Activated CD8-positive, alpha-beta memory T cell treated with anti-CD3 and anti-CD28 coated beads, Interleukin-2, amount 10 ng/mL, durations not matched to agents 7 days and 5 days (primary cell): ENCODE measurements at regions of chr11 and their contacts with region 1.

Region 1: GRCh38 chr11:119323538-119324033 is 6.7 kb upstream of the MCAM start:
- DNase-seq: peak; percentile 87
- ATAC-seq: no peak
- H3K4me3 Mint-ChIP-seq: no peak overlapping the region
- H3K27ac Mint-ChIP-seq: no peak overlapping the region
- H3K4me1 Mint-ChIP-seq: peaks cover 28% of the 10 kb centered on the region
- H3K27me3 Mint-ChIP-seq: peaks cover 8% of the 10 kb centered on the region

Region 2: GRCh38 chr11:119168471-119169281 is 154.9 kb before region 1 on chr11 and contains the start of gene NLRX1:
- CTCF ChIA-PET with region 1: interaction called, 13 read pairs
- DNase-seq: peak; percentile 91
- ATAC-seq: peak; percentile 95
- H3K4me3 Mint-ChIP-seq: peak within 1 kb of the TSS; percentile 85
- H3K27ac Mint-ChIP-seq: peak within 1 kb of the TSS; percentile 91
- H3K4me1 Mint-ChIP-seq: peaks cover 20% of the 10 kb centered on the region
- H3K27me3 Mint-ChIP-seq: no peaks in the 10 kb centered on the region
- total RNA-seq, gene NLRX1: 21.2 to 22.2 TPM

Region 3: DNA sequence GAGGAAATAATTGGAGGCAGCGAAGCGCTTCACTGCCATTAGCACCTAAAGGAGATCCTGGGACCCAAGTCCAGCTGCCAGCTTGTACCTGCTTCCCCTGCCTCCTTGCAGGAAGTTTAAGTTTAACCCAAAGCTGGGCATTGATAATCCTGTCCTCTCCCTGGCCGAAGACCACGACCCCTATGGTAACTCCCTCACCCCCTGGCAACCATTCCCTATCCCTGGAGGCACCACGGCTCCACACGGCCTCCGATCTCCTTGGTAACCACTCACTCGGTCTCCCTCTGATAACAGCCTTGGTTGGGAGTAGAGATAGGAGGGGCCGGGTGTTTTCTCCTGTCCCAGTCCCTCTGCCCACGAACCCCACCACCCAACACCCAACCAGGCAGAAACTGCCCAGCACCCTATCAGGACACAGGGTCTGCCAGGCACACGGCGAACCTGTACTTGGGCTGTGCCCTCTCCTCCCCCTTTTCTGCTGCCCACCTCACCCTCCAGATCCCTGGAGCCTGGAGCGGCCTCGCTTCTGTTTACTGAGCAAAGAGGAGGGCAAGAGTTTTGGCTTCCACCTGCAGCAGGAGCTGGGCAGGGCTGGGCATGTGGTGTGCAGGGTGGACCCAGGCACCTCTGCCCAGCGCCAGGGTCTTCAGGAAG is 137.5 kb before region 1 on chr11:
- CTCF ChIA-PET with region 1: no interaction called
- DNase-seq: no peak
- ATAC-seq: no peak
- H3K4me3 Mint-ChIP-seq: no peak overlapping the region
- H3K27ac Mint-ChIP-seq: no peak overlapping the region
- H3K4me1 Mint-ChIP-seq: no peaks in the 10 kb centered on the region
- H3K27me3 Mint-ChIP-seq: no peaks in the 10 kb centered on the region

Region 4: DNA sequence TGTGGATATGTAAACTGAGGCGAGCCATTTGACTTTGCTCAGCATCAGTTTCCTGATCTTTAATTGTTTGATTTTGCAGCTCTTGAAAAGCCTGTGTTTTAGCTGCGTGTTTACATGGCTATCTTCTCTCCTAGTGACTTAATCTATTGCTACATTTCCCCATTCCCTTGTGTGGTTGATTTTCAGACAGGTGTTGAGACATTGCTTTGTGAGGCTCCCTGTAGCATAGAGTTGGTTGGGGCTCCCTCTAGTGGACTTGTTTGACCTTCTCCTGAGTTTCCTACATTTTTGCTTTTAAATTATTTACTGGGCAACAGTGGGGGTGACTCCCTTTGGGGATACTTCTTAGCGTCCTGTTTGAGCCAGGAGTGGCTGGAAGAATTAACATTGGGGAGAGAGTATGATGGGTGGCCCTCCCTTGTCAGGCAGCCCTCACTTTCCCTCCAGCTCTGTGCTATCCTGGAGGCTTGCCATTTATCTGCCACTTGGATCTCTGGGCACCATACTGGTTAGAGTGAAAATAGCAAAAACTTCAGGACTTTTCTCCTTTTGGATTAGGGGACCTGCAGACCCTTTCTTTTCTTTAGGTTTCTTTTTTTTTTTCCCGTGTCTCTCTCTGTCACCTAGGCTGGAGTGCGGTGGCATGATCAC is 126.6 kb before region 1 on chr11:
- CTCF ChIA-PET with region 1: interaction called, 40 read pairs
- DNase-seq: peak; percentile 76
- ATAC-seq: peak; percentile 97
- H3K4me3 Mint-ChIP-seq: no peak overlapping the region
- H3K27ac Mint-ChIP-seq: no peak overlapping the region
- H3K4me1 Mint-ChIP-seq: peaks cover 4% of the 10 kb centered on the region
- H3K27me3 Mint-ChIP-seq: no peaks in the 10 kb centered on the region

Region 5: DNA sequence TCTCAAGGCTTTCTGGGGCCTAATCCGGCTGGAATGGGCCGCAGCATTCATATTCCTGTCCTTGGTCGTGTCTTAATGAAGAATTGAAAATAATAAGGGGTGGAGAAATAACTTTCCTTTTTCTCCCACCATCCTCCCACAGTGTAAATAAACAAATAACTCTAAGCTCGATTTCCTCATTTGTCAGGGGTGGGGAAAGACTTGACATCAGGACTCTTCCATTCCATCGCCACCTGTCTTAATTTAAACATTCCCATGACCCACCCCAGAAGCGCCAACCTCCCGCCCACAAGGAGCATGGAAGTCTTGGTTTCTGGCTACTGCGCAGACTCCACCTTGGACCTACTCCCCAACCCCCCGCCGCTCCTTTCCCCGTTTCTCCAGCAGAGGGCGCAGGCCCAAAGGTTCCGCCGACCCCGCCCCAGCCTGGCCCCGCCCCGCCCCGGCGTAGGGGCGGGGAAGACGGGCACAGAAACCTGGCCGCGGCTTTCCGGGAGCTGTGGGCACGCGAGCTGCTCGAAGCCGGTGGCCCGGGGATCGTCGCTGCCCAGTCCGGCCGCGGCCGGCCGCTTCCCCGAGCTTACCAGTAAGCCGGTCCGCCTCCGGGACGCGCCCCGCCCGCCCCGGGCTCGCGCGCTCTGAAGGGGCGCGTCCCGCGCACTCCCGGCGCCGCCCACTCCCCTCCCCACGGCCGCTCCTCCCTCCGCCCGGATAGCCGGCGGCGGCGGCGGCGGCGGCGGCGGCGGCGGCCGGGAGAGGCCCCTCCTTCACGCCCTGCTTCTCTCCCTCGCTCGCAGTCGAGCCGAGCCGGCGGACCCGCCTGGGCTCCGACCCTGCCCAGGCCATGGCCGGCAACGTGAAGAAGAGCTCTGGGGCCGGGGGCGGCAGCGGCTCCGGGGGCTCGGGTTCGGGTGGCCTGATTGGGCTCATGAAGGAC is 117.7 kb before region 1 on chr11 and contains the start of gene CBL:
- CTCF ChIA-PET with region 1: interaction called, 66 read pairs
- DNase-seq: peak; percentile 97
- ATAC-seq: peak; percentile 88
- H3K4me3 Mint-ChIP-seq: peak within 1 kb of the TSS; percentile 99
- H3K27ac Mint-ChIP-seq: peak within 1 kb of the TSS; percentile 88
- H3K4me1 Mint-ChIP-seq: peaks cover 29% of the 10 kb centered on the region
- H3K27me3 Mint-ChIP-seq: no peaks in the 10 kb centered on the region
- total RNA-seq, gene CBL: 40.0 to 49.2 TPM

Region 6: DNA sequence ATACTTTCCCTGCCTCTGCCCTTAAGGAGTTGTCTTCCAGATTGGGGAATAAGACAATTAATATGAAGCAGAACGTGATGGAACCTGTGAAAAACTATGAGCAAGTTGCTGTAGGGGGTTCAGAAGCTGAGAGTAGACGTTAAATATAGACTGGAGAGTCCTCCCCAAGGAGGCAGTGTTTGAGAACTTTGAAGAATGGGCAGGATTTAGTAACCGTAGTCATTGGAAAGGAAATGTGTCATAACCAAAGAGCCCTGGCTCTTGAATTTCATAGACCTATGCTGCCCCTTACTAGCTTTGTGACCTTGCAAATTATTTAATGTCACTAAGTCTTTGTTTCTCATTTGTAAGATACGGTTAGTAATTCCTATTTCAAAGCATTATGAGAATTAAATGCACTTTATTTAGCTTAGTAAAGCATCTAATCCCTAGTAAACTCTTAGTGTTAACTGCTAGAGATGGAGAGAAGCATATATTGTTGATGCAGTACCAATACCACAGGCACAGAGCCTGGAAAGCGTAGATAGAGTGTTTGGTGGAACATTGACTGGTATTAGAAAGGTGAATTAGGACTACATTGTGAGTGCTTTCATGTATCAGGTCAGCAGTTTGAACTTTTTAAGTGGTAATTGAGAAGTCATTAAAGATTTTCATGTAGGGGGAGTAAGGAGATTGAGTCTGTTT is 60.8 kb before region 1 on chr11:
- CTCF ChIA-PET with region 1: interaction called, 20 read pairs
- DNase-seq: peak; percentile 45
- ATAC-seq: peak; percentile 82
- H3K4me3 Mint-ChIP-seq: no peak overlapping the region
- H3K27ac Mint-ChIP-seq: no peak overlapping the region
- H3K4me1 Mint-ChIP-seq: peaks cover 57% of the 10 kb centered on the region
- H3K27me3 Mint-ChIP-seq: no peaks in the 10 kb centered on the region

Region 7: DNA sequence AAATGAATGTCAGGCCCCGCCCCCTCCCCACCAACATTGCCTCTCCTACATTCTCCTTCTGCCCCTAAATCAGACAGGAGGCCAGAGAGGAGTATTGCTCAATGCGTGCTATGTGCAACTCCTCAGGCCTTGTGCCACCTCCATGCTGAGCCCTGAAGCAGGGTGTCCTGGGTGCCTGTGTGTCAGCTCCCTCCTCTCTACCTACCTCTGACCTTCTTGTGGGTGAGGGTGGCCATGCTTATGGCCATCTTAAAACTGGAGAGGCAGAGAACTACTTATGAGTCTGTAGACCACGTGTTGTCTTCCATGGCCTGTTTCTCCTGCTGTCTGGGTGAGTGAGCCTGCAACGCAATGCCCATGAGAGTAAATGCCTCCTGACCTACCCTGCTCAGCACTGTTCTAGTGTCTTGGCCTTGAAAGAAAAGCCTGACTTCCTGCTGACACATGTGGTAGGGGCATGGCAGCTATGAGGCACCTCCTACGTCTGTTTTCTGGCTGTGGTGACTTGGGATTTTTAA is 17.2 kb before region 1 on chr11:
- CTCF ChIA-PET with region 1: interaction called, 33 read pairs
- DNase-seq: no peak
- ATAC-seq: peak; percentile 63
- H3K4me3 Mint-ChIP-seq: no peak overlapping the region
- H3K27ac Mint-ChIP-seq: peak overlapping the region; percentile 56
- H3K4me1 Mint-ChIP-seq: peaks cover 16% of the 10 kb centered on the region
- H3K27me3 Mint-ChIP-seq: no peaks in the 10 kb centered on the region

Region 8: GRCh38 chr11:119356349-119357031 is 32.9 kb after region 1 on chr11:
- CTCF ChIA-PET with region 1: interaction called, 16 read pairs
- DNase-seq: peak; percentile 84
- ATAC-seq: peak; percentile 95
- H3K4me3 Mint-ChIP-seq: peak overlapping the region; percentile 77
- H3K27ac Mint-ChIP-seq: peak overlapping the region; percentile 60
- H3K4me1 Mint-ChIP-seq: peaks cover 25% of the 10 kb centered on the region
- H3K27me3 Mint-ChIP-seq: peaks cover 40% of the 10 kb centered on the region

Region 9: DNA sequence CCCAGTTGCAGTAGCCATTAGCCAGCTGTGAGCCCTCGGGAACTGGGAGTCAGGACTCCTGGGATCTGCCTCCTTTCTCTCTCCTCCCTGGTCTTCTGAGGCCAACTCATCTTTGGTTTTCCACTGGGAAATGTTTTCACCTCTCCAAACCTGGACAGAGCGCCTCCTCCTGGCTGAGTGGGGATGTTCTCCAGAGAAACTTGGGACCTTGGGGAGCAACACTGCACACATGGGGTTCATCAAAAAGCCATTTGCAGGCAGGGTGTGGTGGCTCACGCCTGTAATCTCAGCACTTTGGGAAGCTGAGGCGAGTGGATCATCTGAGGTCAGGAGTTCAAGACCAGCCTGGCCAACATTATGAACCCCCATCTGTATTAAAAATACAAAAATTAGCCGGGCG is 260.0 kb after region 1 on chr11:
- CTCF ChIA-PET with region 1: no interaction called
- DNase-seq: no peak
- ATAC-seq: no peak
- H3K4me3 Mint-ChIP-seq: no peak overlapping the region
- H3K27ac Mint-ChIP-seq: no peak overlapping the region
- H3K4me1 Mint-ChIP-seq: peaks cover 7% of the 10 kb centered on the region
- H3K27me3 Mint-ChIP-seq: peaks cover 72% of the 10 kb centered on the region